ENCODE measurements at regions of chr6 and their contacts with region 1.

Region 1: GRCh38 chr6:144215932-144216667 is 65.8 kb downstream of the STX11 start:
- DNase-seq: peak; percentile 85 to 96
- H3K4me3 ChIP-seq: peak overlapping the region; percentile 85
- H3K27ac ChIP-seq: peak overlapping the region; percentile 70
- H3K4me1 ChIP-seq: peaks cover 15% of the 10 kb centered on the region; the same call in 1 of the 2 replicates
- H3K27me3 ChIP-seq: no peaks in the 10 kb centered on the region
- CTCF ChIP-seq: peak; percentile 83

Region 2: DNA sequence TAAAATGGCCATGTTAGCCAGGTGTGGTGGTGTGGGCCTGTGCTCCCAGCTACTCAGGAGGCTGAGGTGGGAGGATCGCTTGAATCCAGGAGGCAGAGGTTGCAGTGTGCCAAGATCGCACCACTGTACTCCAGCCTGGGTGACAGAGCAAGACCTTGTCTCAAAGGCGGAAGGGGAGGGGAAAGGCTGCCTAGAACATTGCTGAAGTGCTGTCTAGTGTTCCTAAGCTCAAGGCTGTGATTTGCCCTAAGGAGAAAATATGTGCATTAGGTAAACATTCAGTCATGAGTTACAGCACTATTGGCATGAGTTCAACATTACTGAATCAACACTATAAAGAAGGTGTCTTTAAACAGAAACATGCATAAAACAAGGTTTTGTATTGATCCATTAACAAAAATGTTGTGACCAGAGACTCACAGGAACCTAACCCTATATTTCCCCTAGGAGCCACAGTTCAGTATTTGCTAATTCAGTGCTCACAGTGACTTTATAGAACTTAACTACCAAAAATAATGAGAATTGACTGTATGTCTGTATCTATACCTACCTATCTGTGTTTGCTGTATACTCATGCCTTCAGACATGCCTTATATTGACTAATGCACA is 337.7 kb before region 1 on chr6:
- CTCF ChIA-PET with region 1: no interaction called
- POLR2A ChIA-PET with region 1: interaction called, 13 read pairs
- intact Hi-C with region 1: no loop called
- DNase-seq: peak in 1 of 2 experiments; percentile 69
- H3K4me3 ChIP-seq: no peak overlapping the region
- H3K27ac ChIP-seq: no peak overlapping the region
- H3K4me1 ChIP-seq: peaks cover 7% of the 10 kb centered on the region
- H3K27me3 ChIP-seq: no peaks in the 10 kb centered on the region
- CTCF ChIP-seq: no peak

Region 3: GRCh38 chr6:144063744-144064401 is 152.2 kb before region 1 on chr6:
- CTCF ChIA-PET with region 1: no interaction called
- POLR2A ChIA-PET with region 1: no interaction called
- intact Hi-C with region 1: loop called (anchors 1 kb)
- DNase-seq: peak; percentile 50 to 81
- H3K4me3 ChIP-seq: peak overlapping the region; percentile 68
- H3K27ac ChIP-seq: no peak overlapping the region
- H3K4me1 ChIP-seq: 0 out of 2 replicates have a peak, but pooled peaks cover 4% of the 10 kb centered on the region
- H3K27me3 ChIP-seq: peaks cover 11% of the 10 kb centered on the region; the same call in 1 of the 2 replicates
- CTCF ChIP-seq: peak; percentile 36; the same call in 1 of the 2 replicates

Region 4: GRCh38 chr6:144149891-144150709 is 66.0 kb before region 1 on chr6 and contains the start of gene STX11:
- CTCF ChIA-PET with region 1: no interaction called
- POLR2A ChIA-PET with region 1: no interaction called
- intact Hi-C with region 1: loop called (anchors 1 kb)
- DNase-seq: peak in 1 of 2 experiments; percentile 64
- H3K4me3 ChIP-seq: peak within 1 kb of the TSS; percentile 76
- H3K27ac ChIP-seq: peak within 1 kb of the TSS; percentile 38; the same call in 1 of the 2 replicates
- H3K4me1 ChIP-seq: peaks cover 11% of the 10 kb centered on the region; the same call in 1 of the 2 replicates
- H3K27me3 ChIP-seq: no peaks in the 10 kb centered on the region
- CTCF ChIP-seq: no peak
- total RNA-seq, gene STX11: 0.17 and 0.40 TPM in 2 replicates

Region 5: GRCh38 chr6:144284783-144285547 is 68.9 kb after region 1 on chr6 and contains the start of gene UTRN:
- CTCF ChIA-PET with region 1: interaction called, 3 read pairs
- POLR2A ChIA-PET with region 1: no interaction called
- intact Hi-C with region 1: loop called (anchors 1 kb)
- DNase-seq: peak; percentile 68 to 81
- H3K4me3 ChIP-seq: peak within 1 kb of the TSS; percentile 93
- H3K27ac ChIP-seq: peak within 1 kb of the TSS; percentile 87
- H3K4me1 ChIP-seq: peaks cover 24% of the 10 kb centered on the region
- H3K27me3 ChIP-seq: no peaks in the 10 kb centered on the region
- CTCF ChIP-seq: no peak
- total RNA-seq, gene UTRN: 108 and 125 TPM in 2 replicates

Region 6: GRCh38 chr6:144362042-144363018 is 146.2 kb after region 1 on chr6:
- CTCF ChIA-PET with region 1: no interaction called
- POLR2A ChIA-PET with region 1: no interaction called
- intact Hi-C with region 1: loop called (anchors 2 kb)
- DNase-seq: peak; percentile 79 to 88
- H3K4me3 ChIP-seq: no peak overlapping the region
- H3K27ac ChIP-seq: peak overlapping the region; percentile 90
- H3K4me1 ChIP-seq: peaks cover 49% of the 10 kb centered on the region
- H3K27me3 ChIP-seq: no peaks in the 10 kb centered on the region
- CTCF ChIP-seq: no peak

Region 7: GRCh38 chr6:144475411-144475810 is 259.3 kb after region 1 on chr6:
- CTCF ChIA-PET with region 1: no interaction called
- POLR2A ChIA-PET with region 1: no interaction called
- intact Hi-C with region 1: no loop called
- DNase-seq: no peak
- H3K4me3 ChIP-seq: no peak overlapping the region
- H3K27ac ChIP-seq: no peak overlapping the region
- H3K4me1 ChIP-seq: no peaks in the 10 kb centered on the region
- H3K27me3 ChIP-seq: no peaks in the 10 kb centered on the region
- CTCF ChIP-seq: no peak

Region 8: GRCh38 chr6:144559865-144560593 is 343.9 kb after region 1 on chr6:
- CTCF ChIA-PET with region 1: no interaction called
- POLR2A ChIA-PET with region 1: no interaction called
- intact Hi-C with region 1: loop called (anchors 5 kb)
- DNase-seq: peak; percentile 32 to 54
- H3K4me3 ChIP-seq: no peak overlapping the region
- H3K27ac ChIP-seq: no peak overlapping the region
- H3K4me1 ChIP-seq: no peaks in the 10 kb centered on the region
- H3K27me3 ChIP-seq: no peaks in the 10 kb centered on the region
- CTCF ChIP-seq: no peak